Cardiac septum (tissue), 1 donor: ENCODE measurements at regions of chrX and their contacts with region 1.

Region 1: GRCh38 chrX:3638280-3638873 is 75.1 kb downstream of the PRKX start:
- DNase-seq: no peak

Region 2: DNA sequence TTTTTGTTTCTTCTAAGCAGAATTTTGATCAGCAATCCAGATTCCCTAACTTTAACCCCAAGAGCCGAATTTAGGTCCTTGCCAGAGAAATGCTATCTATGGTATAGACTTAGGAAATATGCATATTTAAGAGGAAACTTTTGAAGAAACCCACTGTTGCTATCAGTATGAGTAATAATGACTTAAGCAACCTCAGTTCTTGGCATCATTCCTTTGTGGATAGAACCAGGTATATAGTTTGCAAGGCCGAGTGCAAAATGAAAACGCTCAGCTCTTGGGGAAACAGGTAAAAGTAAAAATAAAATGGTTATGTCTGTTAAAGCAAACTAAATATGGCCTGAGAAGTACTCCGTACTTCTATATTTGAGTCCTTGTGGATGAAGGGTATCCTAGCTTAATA is 519.0 kb before region 1 on chrX:
- intact Hi-C with region 1: loop called (anchors 5 kb)
- DNase-seq: no peak

Region 3: GRCh38 chrX:3518870-3519269 is 119.5 kb before region 1 on chrX:
- intact Hi-C with region 1: no loop called
- DNase-seq: peak; percentile 77

Region 4: DNA sequence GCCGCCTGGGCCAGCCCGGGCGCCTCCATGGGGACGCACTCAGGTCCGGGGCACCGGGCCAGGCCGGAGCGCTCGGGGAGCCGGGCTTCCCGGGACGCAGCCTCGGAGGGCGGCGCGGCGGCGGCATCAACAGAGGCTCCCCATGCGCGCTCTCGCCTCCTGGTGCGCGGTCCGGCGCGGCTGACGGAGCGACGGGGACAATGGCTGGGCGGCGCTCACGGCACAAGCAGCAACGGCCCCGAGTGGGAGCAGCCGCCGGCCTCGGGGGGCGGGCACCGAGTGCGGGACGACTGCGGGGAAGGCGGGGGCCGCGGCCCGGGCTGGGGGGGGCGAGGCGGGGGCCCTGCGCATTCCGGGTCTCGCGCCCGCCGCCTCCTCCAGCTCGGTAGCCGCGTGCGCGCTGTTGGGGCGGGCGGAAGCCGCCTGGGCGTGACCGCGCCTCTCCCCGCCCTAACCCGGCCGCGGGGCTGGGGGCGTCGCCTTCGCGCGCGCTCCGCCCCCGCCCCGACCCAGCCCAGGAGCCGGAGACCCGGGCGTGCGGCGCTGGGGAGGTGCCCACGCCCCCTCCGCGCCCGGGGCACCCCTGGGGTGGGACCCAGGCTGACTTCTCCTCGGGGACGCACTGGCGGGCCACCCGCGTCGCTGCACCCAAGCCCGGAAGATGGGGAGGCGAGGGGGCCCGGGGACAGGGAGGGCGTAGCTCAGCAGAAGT is 75.0 kb after region 1 on chrX and contains the start of gene PRKX:
- intact Hi-C with region 1: no loop called
- DNase-seq: peak; percentile 80
- total RNA-seq, gene PRKX: 3.8 TPM